Heart left ventricle (tissue), 16 donors: ENCODE measurements at regions of chr10 and their contacts with region 1.

Region 1: GRCh38 chr10:127055259-127055658 is 141.1 kb downstream of the INSYN2A start:
- DNase-seq: no peak
- ATAC-seq: no peak
- H3K4me3 ChIP-seq: no peak overlapping the region
- H3K27ac ChIP-seq: no peak overlapping the region
- H3K4me1 ChIP-seq: no peaks in the 10 kb centered on the region
- H3K27me3 ChIP-seq: no peaks in the 10 kb centered on the region
- CTCF ChIP-seq: no peak
- POLR2A ChIP-seq: no peak

Region 2: GRCh38 chr10:126776138-126776537 is 279.1 kb before region 1 on chr10:
- intact Hi-C with region 1: no loop called
- DNase-seq: no peak
- ATAC-seq: no peak
- H3K4me3 ChIP-seq: no peak overlapping the region
- H3K27ac ChIP-seq: no peak overlapping the region
- H3K4me1 ChIP-seq: no peaks in the 10 kb centered on the region
- H3K27me3 ChIP-seq: no peaks in the 10 kb centered on the region
- CTCF ChIP-seq: no peak
- POLR2A ChIP-seq: no peak

Region 3: GRCh38 chr10:127228195-127228787 is 173.0 kb after region 1 on chr10:
- intact Hi-C with region 1: no loop called
- DNase-seq: no peak
- ATAC-seq: no peak
- H3K4me3 ChIP-seq: no peak overlapping the region
- H3K27ac ChIP-seq: no peak overlapping the region
- H3K4me1 ChIP-seq: no peaks in the 10 kb centered on the region
- H3K27me3 ChIP-seq: no peaks in the 10 kb centered on the region
- CTCF ChIP-seq: no peak
- POLR2A ChIP-seq: no peak

Region 4: GRCh38 chr10:127483695-127484094 is 428.4 kb after region 1 on chr10:
- intact Hi-C with region 1: loop called in 1 of 10 experiments (anchors 5 kb)
- DNase-seq: no peak
- ATAC-seq: no peak
- H3K4me3 ChIP-seq: no peak overlapping the region
- H3K27ac ChIP-seq: no peak overlapping the region
- H3K4me1 ChIP-seq: no peaks in the 10 kb centered on the region
- H3K27me3 ChIP-seq: peaks cover 0 to 10% (median 0%) of the 10 kb centered on the region in 9 donors
- CTCF ChIP-seq: no peak
- POLR2A ChIP-seq: no peak